Sigmoid colon (tissue), 7 donors: ENCODE measurements at regions of chr2 and their contacts with region 1.

Region 1: DNA sequence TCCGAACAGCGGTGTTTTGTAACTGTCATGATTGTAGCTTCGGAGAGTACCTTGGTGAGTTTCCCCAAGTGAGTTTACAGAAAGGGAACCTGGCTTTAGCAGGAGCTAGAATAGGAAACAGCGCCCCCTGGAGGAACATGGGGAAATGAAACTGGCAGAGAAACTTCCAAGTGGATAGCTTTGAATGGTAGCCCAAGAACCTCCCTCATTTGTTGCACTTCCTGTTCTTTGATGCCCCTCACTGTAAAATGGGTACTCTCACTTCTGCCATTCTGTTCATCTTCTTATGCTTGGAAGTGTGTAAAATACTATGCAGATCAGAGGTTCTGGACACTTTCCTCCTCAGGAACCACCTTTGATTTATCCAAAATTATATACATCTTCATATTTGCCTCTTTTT is 36.2 kb downstream of the CHST10 start:
- DNase-seq: peak; percentile 88
- H3K4me3 ChIP-seq: no peak overlapping the region
- H3K27ac ChIP-seq: no peak overlapping the region
- H3K4me1 ChIP-seq: no peaks in the 10 kb centered on the region
- H3K27me3 ChIP-seq: no peaks in the 10 kb centered on the region
- CTCF ChIP-seq: peak; percentile 73 to 89 (median 80)
- EP300 ChIP-seq: no peak
- POLR2A ChIP-seq: no peak

Region 2: DNA sequence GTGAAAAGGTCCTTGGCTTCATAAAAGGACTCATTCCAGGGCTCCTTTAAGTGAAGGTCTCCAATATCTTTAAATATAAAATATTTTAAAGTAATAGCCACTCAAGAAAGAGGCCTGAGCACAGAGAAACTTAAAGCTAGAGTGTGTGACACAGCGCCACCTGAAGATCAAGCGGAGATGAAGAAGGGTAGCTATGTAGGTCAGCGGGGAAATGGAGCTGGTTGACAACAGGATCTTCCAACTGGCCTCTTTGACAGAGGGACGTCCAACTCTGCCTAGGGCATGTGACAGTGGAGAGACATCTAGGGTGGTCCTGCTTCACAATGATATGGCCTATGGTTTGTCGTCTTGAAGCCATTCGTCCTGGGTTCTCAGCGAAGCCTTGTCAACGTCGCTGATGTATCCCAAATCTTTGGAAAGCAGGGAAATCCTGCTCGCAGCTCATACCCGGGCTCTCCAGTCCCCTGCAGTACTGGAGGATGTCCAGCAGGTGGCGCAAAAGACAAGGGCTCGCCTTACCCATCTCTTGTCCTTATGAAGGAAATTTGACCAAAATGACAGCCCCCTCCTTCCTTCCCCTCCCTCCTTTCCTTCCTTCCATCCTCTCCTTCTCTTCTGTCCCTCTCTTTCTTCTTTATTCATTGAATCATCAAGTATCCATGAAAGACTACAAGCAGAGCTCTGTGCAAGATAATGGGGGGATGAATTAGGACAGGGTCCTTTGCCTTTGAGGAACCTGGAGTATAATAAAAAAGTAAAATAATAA is 118.5 kb before region 1 on chr2:
- intact Hi-C with region 1: loop called (anchors 1 kb)
- DNase-seq: peak; percentile 84
- H3K4me3 ChIP-seq: no peak overlapping the region
- H3K27ac ChIP-seq: no peak overlapping the region
- H3K4me1 ChIP-seq: peaks cover 0 to 10% (median 6%) of the 10 kb centered on the region in 4 donors
- H3K27me3 ChIP-seq: no peaks in the 10 kb centered on the region
- CTCF ChIP-seq: peak; percentile 79 to 99 (median 92)
- EP300 ChIP-seq: no peak
- POLR2A ChIP-seq: no peak